ENCODE measurements at regions of chr17 and their contacts with region 1.

Region 1: GRCh38 chr17:40303009-40303657 is 5.8 kb upstream of the RARA start:
- DNase-seq: peak; percentile 70
- H3K4me3 Mint-ChIP-seq: no peak overlapping the region
- H3K27ac Mint-ChIP-seq: no peak overlapping the region
- H3K4me1 Mint-ChIP-seq: peaks cover 11% of the 10 kb centered on the region
- H3K27me3 Mint-ChIP-seq: no peaks in the 10 kb centered on the region
- CTCF ChIP-seq: peak; percentile 62

Region 2: GRCh38 chr17:40287494-40288369 is 15.4 kb before region 1 on chr17 and contains the start of gene CDC6:
- CTCF ChIA-PET with region 1: interaction called, 13 read pairs
- POLR2A ChIA-PET with region 1: interaction called, 6 read pairs
- intact Hi-C with region 1: no loop called
- DNase-seq: peak; percentile 100
- H3K4me3 Mint-ChIP-seq: peak within 1 kb of the TSS; percentile 99
- H3K27ac Mint-ChIP-seq: peak within 1 kb of the TSS; percentile 69
- H3K4me1 Mint-ChIP-seq: peaks cover 24% of the 10 kb centered on the region
- H3K27me3 Mint-ChIP-seq: no peaks in the 10 kb centered on the region
- CTCF ChIP-seq: no peak
- total RNA-seq, gene CDC6: 70.0 and 96.8 TPM in 2 replicates

Region 3: DNA sequence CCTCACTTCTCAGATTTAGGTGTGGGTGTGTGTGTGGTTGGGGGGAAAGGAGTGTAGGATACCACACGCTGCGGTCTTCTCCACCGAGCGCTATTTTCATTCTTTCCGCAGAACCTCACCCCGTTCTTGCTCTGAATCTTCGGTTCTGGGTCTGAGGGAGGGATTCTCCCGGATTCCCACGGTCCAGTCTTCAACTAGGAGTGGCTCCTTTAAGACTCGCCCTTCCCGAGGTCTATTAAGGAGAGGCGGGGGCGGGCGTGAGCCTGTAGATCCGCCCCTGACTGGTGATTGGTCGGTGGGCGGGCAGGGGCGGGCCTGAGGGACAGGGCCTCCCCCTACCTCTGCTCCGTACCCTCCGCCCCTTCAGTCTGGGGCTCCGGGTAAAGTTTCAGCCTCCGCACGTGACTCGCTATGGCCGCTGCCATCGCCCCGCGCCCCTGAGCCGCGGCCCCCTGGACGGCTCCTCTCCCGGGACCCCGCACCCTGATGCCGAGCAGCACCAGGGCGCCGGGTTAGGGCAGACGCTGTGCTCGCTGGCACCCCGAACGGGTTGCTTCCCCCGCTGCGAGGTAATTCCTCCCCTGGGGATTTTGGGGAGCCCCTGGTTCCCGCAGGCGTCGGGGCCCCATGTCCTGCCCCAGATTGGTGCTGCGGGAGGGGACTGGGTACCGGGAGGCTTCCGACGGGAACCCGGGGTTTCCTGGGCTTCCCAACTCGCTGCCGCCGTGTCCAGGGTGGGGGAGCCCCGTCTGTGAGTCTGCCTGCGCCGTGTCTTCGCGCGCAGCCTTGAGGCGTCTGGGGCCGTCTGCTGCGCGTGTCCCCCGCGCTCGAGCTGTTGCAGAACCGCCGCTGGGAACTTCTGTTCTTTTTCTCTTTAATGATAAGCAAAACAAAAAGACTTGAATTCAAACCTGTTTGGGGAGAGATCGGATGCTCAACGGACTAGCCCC is 15.0 kb after region 1 on chr17:
- CTCF ChIA-PET with region 1: interaction called, 14 read pairs
- POLR2A ChIA-PET with region 1: interaction called, 11 read pairs
- intact Hi-C with region 1: no loop called
- DNase-seq: peak; percentile 97
- H3K4me3 Mint-ChIP-seq: peak overlapping the region; percentile 81
- H3K27ac Mint-ChIP-seq: peak overlapping the region; percentile 32
- H3K4me1 Mint-ChIP-seq: peaks cover 86% of the 10 kb centered on the region
- H3K27me3 Mint-ChIP-seq: no peaks in the 10 kb centered on the region
- CTCF ChIP-seq: no peak

Region 4: GRCh38 chr17:40349920-40350909 is 47.1 kb after region 1 on chr17:
- CTCF ChIA-PET with region 1: interaction called, 396 read pairs
- POLR2A ChIA-PET with region 1: interaction called, 5 read pairs
- intact Hi-C with region 1: loop called (anchors 1 kb)
- DNase-seq: peak; percentile 65
- H3K4me3 Mint-ChIP-seq: peak overlapping the region; percentile 56
- H3K27ac Mint-ChIP-seq: peak overlapping the region; percentile 77
- H3K4me1 Mint-ChIP-seq: peaks cover 40% of the 10 kb centered on the region
- H3K27me3 Mint-ChIP-seq: no peaks in the 10 kb centered on the region
- CTCF ChIP-seq: no peak

Region 5: GRCh38 chr17:40355123-40355803 is 52.1 kb after region 1 on chr17:
- CTCF ChIA-PET with region 1: interaction called, 396 read pairs
- POLR2A ChIA-PET with region 1: interaction called, 5 read pairs
- intact Hi-C with region 1: loop called (anchors 1 kb)
- DNase-seq: peak; percentile 56
- H3K4me3 Mint-ChIP-seq: no peak overlapping the region
- H3K27ac Mint-ChIP-seq: no peak overlapping the region
- H3K4me1 Mint-ChIP-seq: peaks cover 7% of the 10 kb centered on the region
- H3K27me3 Mint-ChIP-seq: no peaks in the 10 kb centered on the region
- CTCF ChIP-seq: peak; percentile 94

Region 6: DNA sequence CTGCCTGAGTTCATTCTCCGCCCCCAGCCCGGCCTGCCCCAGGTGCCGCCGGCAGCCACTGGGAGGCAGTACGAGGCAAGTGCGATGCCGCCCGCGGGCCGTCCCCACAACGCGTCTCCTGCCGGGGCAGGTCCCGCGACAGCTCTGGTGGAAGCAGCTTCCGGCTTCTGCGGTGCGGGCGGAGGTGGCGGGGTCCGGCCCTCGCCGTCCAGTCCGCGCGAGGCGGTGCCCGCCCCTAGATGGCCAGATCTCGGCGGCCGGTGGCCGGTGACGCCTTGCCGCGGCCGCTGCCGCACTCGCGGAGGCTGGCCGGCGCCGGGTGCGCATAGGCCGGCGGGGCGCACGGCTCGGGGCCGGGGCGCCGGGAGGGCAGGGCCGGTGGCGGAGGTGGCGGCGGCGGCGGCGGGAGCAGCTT is 59.6 kb after region 1 on chr17:
- CTCF ChIA-PET with region 1: interaction called, 396 read pairs
- POLR2A ChIA-PET with region 1: no interaction called
- intact Hi-C with region 1: no loop called
- DNase-seq: peak; percentile 74
- H3K4me3 Mint-ChIP-seq: peak overlapping the region; percentile 69
- H3K27ac Mint-ChIP-seq: no peak overlapping the region
- H3K4me1 Mint-ChIP-seq: peaks cover 11% of the 10 kb centered on the region
- H3K27me3 Mint-ChIP-seq: no peaks in the 10 kb centered on the region
- CTCF ChIP-seq: peak; percentile 72

Region 7: GRCh38 chr17:40417609-40418427 is 114.7 kb after region 1 on chr17 and contains the start of gene TOP2A:
- CTCF ChIA-PET with region 1: interaction called, 18 read pairs
- POLR2A ChIA-PET with region 1: interaction called, 3 read pairs
- intact Hi-C with region 1: loop called (anchors 5 kb)
- DNase-seq: peak; percentile 100
- H3K4me3 Mint-ChIP-seq: peak within 1 kb of the TSS; percentile 96
- H3K27ac Mint-ChIP-seq: peak within 1 kb of the TSS; percentile 82
- H3K4me1 Mint-ChIP-seq: peaks cover 8% of the 10 kb centered on the region
- H3K27me3 Mint-ChIP-seq: no peaks in the 10 kb centered on the region
- CTCF ChIP-seq: no peak
- total RNA-seq, gene TOP2A: 100 and 151 TPM in 2 replicates

Region 8: DNA sequence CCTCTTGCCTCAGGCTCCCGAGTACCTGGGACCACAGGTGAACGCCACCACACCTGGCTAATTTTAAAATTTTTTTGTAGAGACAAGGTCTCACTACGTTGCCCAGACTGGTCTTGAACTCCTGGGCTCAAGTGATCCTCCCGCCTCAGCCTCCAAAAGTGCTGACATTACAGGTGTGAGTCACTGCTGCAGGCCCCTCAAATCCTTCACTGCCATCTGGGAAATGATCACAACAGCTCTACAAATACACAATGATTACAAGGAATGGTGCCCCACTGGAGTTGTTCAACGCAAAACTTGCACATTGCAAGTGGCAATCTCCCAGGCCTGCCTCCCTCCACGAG is 139.2 kb after region 1 on chr17:
- CTCF ChIA-PET with region 1: no interaction called
- POLR2A ChIA-PET with region 1: no interaction called
- intact Hi-C with region 1: no loop called
- DNase-seq: no peak
- H3K4me3 Mint-ChIP-seq: peak overlapping the region; percentile 19
- H3K27ac Mint-ChIP-seq: no peak overlapping the region
- H3K4me1 Mint-ChIP-seq: peaks cover 17% of the 10 kb centered on the region
- H3K27me3 Mint-ChIP-seq: peaks cover 17% of the 10 kb centered on the region
- CTCF ChIP-seq: no peak